Endothelial cell of umbilical vein (primary cell): ENCODE measurements at regions of chr3 and their contacts with region 1.

Region 1: GRCh38 chr3:51670823-51671733 is at the start of gene TEX264:
- DNase-seq: peak; percentile 69
- H3K4me3 ChIP-seq: peak within 1 kb of the TSS; percentile 72 to 88 (median 82)
- H3K27ac ChIP-seq: peak within 1 kb of the TSS; percentile 55
- H3K4me1 ChIP-seq: peaks cover 12% of the 10 kb centered on the region
- H3K27me3 ChIP-seq: no peaks in the 10 kb centered on the region
- CTCF ChIP-seq: no peak
- POLR2A ChIP-seq: peak; percentile 88
- total RNA-seq, gene TEX264: 26.3 and 29.0 TPM in 2 replicates

Region 2: GRCh38 chr3:51391075-51391567 is 280.0 kb before region 1 on chr3 and contains the start of gene RBM15B:
- CTCF ChIA-PET with region 1: interaction called, 5 read pairs
- POLR2A ChIA-PET with region 1: no interaction called
- dilution Hi-C with region 1: no loop called
- intact Hi-C with region 1: loop called (anchors 1 kb)
- DNase-seq: peak; percentile 96
- H3K4me3 ChIP-seq: peak within 1 kb of the TSS; percentile 29 to 77 (median 36)
- H3K27ac ChIP-seq: peak within 1 kb of the TSS; percentile 50
- H3K4me1 ChIP-seq: peaks cover 49% of the 10 kb centered on the region
- H3K27me3 ChIP-seq: no peaks in the 10 kb centered on the region
- CTCF ChIP-seq: peak in 1 of 2 donors; percentile 91
- POLR2A ChIP-seq: peak; percentile 75
- total RNA-seq, gene RBM15B: 38.3 and 39.1 TPM in 2 replicates

Region 3: DNA sequence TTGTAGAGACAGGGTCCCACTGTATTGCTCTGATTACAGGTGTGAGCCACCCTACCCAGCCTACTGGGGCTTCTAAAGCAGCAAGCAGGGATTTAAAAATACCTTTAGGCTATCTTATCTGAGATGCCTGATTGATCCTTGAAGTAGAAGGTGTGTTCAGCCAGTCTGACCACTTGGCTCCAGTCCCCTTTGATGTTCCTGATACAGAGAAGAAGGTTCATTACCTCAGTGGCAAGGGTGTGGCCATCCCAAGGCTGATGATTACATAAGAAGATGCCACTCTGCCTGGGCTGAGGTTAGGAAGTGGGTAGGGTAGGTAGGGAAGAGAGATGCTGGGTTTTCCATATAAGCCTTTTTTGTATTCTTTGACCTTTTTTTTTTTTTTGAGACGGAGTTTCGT is 160.1 kb before region 1 on chr3:
- CTCF ChIA-PET with region 1: interaction called, 11 read pairs
- POLR2A ChIA-PET with region 1: no interaction called
- dilution Hi-C with region 1: no loop called
- intact Hi-C with region 1: no loop called
- DNase-seq: no peak
- H3K4me3 ChIP-seq: no peak overlapping the region
- H3K27ac ChIP-seq: no peak overlapping the region
- H3K4me1 ChIP-seq: no peaks in the 10 kb centered on the region
- H3K27me3 ChIP-seq: no peaks in the 10 kb centered on the region
- CTCF ChIP-seq: no peak
- POLR2A ChIP-seq: no peak

Region 4: DNA sequence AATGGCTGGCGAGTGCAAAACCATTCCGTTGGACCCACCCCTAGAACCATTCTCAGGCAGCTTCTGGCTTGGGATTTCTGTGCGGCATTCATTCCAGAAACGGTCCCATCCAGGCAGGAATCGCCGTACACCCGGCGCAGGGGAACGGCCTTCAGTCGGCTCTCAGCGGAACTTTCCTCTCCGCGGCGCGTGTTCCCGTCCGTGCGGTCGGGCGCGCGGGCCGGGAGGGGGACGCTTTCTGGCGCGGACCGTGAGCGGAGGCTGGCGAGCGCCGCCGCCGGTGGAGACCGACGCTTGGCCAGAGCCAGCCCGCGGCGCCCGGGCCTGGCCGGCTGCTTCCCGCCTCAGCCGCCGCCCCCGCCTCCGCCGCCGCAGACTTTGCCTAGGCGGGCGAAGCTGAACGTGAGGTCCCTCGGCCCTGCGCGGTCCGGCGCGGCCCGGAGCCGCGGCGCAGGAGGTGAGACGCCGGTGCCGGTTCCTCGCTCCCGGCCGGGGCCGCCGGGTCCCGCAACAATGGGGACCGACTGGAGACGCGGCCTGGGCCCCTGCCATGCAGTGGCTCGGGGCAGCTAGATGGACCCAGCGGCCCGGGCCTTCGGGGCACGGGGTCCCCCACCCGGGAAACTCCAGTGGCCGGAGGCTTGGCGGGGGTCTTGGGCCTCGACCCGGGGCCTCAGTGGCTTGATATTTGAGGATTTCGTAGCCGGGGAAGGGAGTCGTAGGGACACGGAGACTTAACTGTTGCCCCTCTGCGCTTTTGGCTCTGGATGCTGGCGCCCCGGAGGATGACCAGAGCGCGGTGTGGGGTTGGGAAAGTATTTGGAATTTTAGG is 132.4 kb before region 1 on chr3 and contains the start of gene RAD54L2:
- CTCF ChIA-PET with region 1: interaction called, 17 read pairs
- POLR2A ChIA-PET with region 1: no interaction called
- dilution Hi-C with region 1: no loop called
- intact Hi-C with region 1: no loop called
- DNase-seq: peak; percentile 86
- H3K4me3 ChIP-seq: peak within 1 kb of the TSS; percentile 81 to 91 (median 83)
- H3K27ac ChIP-seq: peak within 1 kb of the TSS; percentile 54
- H3K4me1 ChIP-seq: peaks cover 15% of the 10 kb centered on the region
- H3K27me3 ChIP-seq: no peaks in the 10 kb centered on the region
- CTCF ChIP-seq: peak in 1 of 2 donors; percentile 21
- POLR2A ChIP-seq: peak; percentile 75
- total RNA-seq, gene RAD54L2: 31.1 and 32.5 TPM in 2 replicates

Region 5: DNA sequence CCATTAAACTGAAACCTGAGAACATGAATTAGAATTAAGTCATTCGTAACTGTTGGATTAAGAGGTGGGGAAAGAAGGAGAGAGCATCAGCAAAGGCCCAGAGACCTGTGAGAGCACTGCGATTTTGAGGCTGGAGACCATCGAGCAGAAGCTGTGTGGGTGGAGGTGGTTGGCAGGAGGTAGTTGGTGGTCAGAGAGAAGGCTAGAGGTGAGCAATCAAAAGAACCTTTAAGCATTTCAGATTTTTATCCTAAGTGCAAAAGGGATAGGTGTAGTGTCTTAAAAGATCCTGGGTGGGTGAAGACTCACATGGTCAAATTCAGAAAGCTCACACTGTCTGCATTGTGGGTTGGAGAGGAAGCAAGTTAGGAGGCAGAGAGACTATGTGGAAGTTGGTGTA is 65.1 kb before region 1 on chr3:
- CTCF ChIA-PET with region 1: no interaction called
- POLR2A ChIA-PET with region 1: no interaction called
- dilution Hi-C with region 1: no loop called
- intact Hi-C with region 1: no loop called
- DNase-seq: no peak
- H3K4me3 ChIP-seq: no peak overlapping the region
- H3K27ac ChIP-seq: no peak overlapping the region
- H3K4me1 ChIP-seq: no peaks in the 10 kb centered on the region
- H3K27me3 ChIP-seq: no peaks in the 10 kb centered on the region
- CTCF ChIP-seq: no peak
- POLR2A ChIP-seq: no peak

Region 6: DNA sequence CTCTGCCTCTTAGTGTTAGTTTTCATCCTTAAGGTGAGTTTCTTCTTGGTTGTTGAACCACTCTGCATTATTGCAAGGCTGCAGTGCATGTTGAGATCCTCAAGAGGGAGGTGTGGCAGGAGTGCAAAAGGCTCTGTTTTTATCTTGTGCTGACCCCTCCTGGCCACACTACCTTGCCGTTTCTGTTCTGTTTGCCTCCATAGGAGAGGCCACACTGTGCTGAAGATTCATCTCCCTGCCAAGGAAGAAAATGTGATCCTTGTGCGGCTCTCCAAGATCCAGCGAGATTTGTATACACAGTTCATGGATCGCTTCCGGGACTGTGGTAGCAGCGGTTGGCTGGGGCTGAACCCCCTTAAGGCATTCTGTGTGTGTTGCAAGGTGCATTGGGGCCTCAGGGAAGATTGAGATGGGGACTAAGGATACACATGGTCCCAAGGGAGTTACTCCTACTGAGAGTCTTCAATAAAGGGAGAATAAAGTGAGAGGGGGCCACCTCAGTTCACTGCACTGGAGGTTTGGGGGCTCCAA is 33.1 kb before region 1 on chr3:
- CTCF ChIA-PET with region 1: interaction called, 46 read pairs
- POLR2A ChIA-PET with region 1: no interaction called
- dilution Hi-C with region 1: no loop called
- intact Hi-C with region 1: loop called (anchors 1 kb)
- DNase-seq: peak; percentile 64
- H3K4me3 ChIP-seq: no peak overlapping the region
- H3K27ac ChIP-seq: no peak overlapping the region
- H3K4me1 ChIP-seq: no peaks in the 10 kb centered on the region
- H3K27me3 ChIP-seq: no peaks in the 10 kb centered on the region
- CTCF ChIP-seq: peak; percentile 74 to 89
- POLR2A ChIP-seq: no peak

Region 7: GRCh38 chr3:51657234-51657633 is 13.8 kb before region 1 on chr3:
- CTCF ChIA-PET with region 1: interaction called, 28 read pairs
- POLR2A ChIA-PET with region 1: no interaction called
- dilution Hi-C with region 1: no loop called
- intact Hi-C with region 1: no loop called
- DNase-seq: no peak
- H3K4me3 ChIP-seq: no peak overlapping the region
- H3K27ac ChIP-seq: no peak overlapping the region
- H3K4me1 ChIP-seq: no peaks in the 10 kb centered on the region
- H3K27me3 ChIP-seq: no peaks in the 10 kb centered on the region
- CTCF ChIP-seq: no peak
- POLR2A ChIP-seq: no peak

Region 8: DNA sequence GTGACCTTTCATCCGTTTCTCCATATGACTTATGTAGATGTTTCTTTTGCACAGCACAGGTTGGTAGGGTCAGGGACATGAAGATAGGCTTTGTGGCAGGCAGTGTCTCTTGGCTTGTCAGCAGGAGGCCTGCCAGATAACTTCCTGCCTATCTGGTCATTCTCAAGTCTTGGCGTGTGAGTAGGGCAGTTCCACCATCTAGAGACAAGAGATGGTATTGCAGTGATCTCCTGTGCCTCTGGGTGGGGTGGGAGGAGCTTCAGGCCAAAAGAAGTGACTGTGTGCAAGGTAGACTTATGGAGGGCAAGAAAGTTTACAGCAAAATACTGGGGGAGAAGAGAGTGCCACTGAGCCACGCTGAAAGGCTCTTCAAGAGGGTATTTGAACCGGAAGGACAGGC is 11.0 kb after region 1 on chr3:
- CTCF ChIA-PET with region 1: interaction called, 135 read pairs
- POLR2A ChIA-PET with region 1: no interaction called
- dilution Hi-C with region 1: no loop called
- intact Hi-C with region 1: loop called (anchors 1 kb)
- DNase-seq: peak; percentile 82
- H3K4me3 ChIP-seq: no peak overlapping the region
- H3K27ac ChIP-seq: no peak overlapping the region
- H3K4me1 ChIP-seq: peaks cover 19% of the 10 kb centered on the region
- H3K27me3 ChIP-seq: no peaks in the 10 kb centered on the region
- CTCF ChIP-seq: peak; percentile 64 to 67
- POLR2A ChIP-seq: no peak

Region 9: DNA sequence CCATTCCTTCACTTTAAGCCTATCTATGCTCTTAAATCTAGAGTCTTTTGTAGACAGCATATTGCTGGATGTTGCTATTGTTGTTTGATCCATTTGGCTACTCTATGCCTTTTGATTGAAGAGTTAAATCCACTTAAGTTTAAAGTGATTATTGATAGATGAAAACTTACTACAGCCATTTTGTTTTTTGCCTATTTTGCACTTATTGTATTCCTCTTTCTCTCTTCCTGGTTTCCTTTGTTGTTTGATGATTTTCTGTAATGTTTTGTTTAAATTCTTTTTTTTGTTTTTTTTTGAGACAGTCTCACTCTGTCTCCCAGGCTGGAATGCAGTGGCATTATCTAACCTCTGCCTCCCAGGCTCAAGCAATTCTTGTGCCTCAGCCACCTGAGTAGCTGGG is 88.1 kb after region 1 on chr3:
- CTCF ChIA-PET with region 1: no interaction called
- POLR2A ChIA-PET with region 1: no interaction called
- dilution Hi-C with region 1: no loop called
- intact Hi-C with region 1: no loop called
- DNase-seq: no peak
- H3K4me3 ChIP-seq: no peak overlapping the region
- H3K27ac ChIP-seq: no peak overlapping the region
- H3K4me1 ChIP-seq: no peaks in the 10 kb centered on the region
- H3K27me3 ChIP-seq: no peaks in the 10 kb centered on the region
- CTCF ChIP-seq: no peak
- POLR2A ChIP-seq: no peak